ENCODE measurements at regions of chr13 and their contacts with region 1.

Region 1: GRCh38 chr13:29379281-29379680 is 216.2 kb downstream of the SLC7A1 start:
- DNase-seq: no peak
- H3K4me3 ChIP-seq: no peak overlapping the region
- H3K27ac ChIP-seq: no peak overlapping the region
- H3K4me1 ChIP-seq: peaks cover 0 to 8% of the 10 kb centered on the region in 2 experiments; a peak in 2 of 4 replicates
- H3K27me3 ChIP-seq: no peaks in the 10 kb centered on the region; the same call in 1 of the 2 replicates
- CTCF ChIP-seq: no peak
- EP300 ChIP-seq: no peak
- RAD21 ChIP-seq: no peak

Region 2: GRCh38 chr13:29369060-29369743 is 10.1 kb before region 1 on chr13:
- CTCF ChIA-PET with region 1: interaction called, 17 read pairs
- POLR2A ChIA-PET with region 1: no interaction called
- DNase-seq: peak; percentile 39
- H3K4me3 ChIP-seq: no peak overlapping the region; a peak in 1 of 4 replicates
- H3K27ac ChIP-seq: no peak overlapping the region
- H3K4me1 ChIP-seq: no peaks in the 10 kb centered on the region
- H3K27me3 ChIP-seq: peaks cover 20% of the 10 kb centered on the region
- CTCF ChIP-seq: peak; percentile 67
- EP300 ChIP-seq: no peak
- RAD21 ChIP-seq: peak; percentile 77

Region 3: DNA sequence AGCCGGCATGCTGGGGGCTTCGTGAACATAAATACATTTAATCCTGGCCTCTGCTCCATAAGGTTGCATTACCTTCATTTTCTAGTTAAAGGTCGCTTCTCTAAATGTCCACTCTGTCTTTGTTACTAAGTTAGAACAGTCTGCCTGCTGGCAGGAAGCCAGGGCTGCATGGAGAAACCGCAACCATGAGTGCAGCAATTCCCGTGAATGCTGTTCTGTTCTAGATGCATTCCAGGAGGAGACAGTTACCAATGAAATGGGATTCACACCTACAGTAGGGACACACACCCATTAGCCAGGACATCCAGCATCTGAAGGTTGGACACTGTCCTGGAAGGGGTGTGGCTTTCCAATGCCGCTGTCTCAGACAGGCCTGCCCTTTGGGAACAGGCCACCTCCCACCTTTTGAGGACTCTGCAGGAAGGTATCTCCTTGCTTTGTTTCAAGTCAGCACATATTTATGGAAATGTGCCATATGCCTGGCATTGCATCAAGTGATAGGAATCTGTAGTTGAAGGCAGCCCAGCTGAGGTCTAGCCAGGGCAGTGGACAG is 86.5 kb after region 1 on chr13:
- CTCF ChIA-PET with region 1: no interaction called
- POLR2A ChIA-PET with region 1: no interaction called
- DNase-seq: peak; percentile 47
- H3K4me3 ChIP-seq: no peak overlapping the region
- H3K27ac ChIP-seq: peak overlapping the region in 1 of 2 experiments; percentile 39; a peak in 2 of 4 replicates
- H3K4me1 ChIP-seq: peaks cover 0 to 18% of the 10 kb centered on the region in 2 experiments; a peak in 2 of 4 replicates
- H3K27me3 ChIP-seq: no peaks in the 10 kb centered on the region
- CTCF ChIP-seq: no peak
- EP300 ChIP-seq: peak in 1 of 2 experiments; percentile 22; a peak in 2 of 4 replicates
- RAD21 ChIP-seq: no peak